Mammary epithelial cell (primary cell): ENCODE measurements at regions of chr4 and their contacts with region 1.

Region 1: DNA sequence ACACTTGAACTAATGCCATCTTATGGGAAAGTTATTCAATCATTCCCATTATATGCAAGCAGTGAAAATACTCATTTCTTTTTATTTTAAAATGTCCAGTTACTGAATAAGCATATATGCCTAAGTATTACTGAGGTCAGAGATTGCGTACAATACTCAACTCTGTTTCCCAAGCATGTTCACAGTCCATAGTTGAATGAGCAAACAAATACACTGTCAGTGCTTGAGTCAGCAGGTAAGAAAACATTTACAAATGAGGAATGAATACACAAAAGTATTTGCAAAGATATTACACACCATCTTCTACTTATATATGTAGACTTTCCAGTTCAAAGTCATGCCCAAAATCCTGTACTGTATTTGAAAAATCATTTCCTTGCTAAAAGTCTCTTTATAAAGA is 74.1 kb downstream of the TSPAN5 start:
- DNase-seq: peak; percentile 37
- H3K4me3 ChIP-seq: no peak overlapping the region
- H3K27ac ChIP-seq: no peak overlapping the region
- H3K4me1 ChIP-seq: peaks cover 26% of the 10 kb centered on the region
- H3K27me3 ChIP-seq: no peaks in the 10 kb centered on the region
- CTCF ChIP-seq: no peak

Region 2: DNA sequence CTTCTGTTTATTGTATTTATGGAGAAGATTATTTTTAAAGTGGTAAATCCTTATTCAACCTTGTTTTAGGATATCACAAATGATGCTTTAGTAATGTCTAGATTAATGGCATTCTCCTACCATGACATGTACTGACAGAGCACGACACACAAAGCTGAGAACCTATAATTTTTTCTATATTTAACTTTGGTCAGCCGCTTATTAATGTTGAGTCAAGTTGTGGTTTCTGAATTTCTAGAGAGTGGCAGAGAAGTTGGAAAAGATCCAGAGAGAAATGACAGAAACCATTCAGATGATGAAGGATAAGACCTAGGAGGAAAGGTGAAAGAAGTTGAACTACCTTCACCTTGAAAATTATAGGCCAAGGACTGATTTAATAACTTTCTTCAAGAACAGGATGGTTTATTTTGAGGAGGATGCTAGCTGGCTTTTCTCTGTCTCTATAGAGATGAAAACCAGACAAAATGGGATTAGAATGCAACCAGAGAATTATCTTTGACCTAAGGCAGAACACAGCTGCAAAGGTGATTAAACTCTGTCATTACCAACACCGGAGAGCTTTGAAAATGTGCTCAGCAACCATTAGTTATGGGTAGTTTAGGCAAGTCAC is 136.7 kb after region 1 on chr4:
- CTCF ChIA-PET with region 1: no interaction called
- dilution Hi-C with region 1: no loop called
- in situ Hi-C with region 1: no loop called
- intact Hi-C with region 1: loop called (anchors 5 kb)
- DNase-seq: peak; percentile 87
- H3K4me3 ChIP-seq: peak overlapping the region in 1 of 3 experiments; percentile 10
- H3K27ac ChIP-seq: no peak overlapping the region
- H3K4me1 ChIP-seq: peaks cover 16% of the 10 kb centered on the region
- H3K27me3 ChIP-seq: no peaks in the 10 kb centered on the region
- CTCF ChIP-seq: no peak